ENCODE measurements at regions of chr7 and their contacts with region 1.

Region 1: DNA sequence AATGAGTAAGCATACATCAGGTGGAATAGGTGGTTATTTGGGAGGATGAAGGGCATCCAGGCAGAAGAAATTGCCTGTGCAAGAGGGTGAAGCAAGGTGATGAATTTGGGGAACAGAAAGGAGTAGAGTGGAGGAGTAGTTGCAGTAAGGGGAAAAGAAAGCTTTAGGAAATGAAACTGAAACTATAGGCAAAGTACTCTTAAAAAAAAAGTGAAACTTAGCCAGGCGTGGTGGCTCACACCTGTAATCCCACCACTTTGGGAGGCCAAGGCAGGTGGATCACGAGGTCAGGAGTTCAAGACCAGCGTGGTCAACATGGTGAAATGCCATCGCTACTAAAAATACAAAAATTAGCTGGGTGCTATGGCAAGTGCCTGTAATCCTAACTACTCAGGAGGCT is 17.6 kb downstream of the NUP205 start:
- DNase-seq: no peak
- H3K4me3 ChIP-seq: no peak overlapping the region
- H3K27ac ChIP-seq: no peak overlapping the region
- H3K4me1 ChIP-seq: no peaks in the 10 kb centered on the region
- H3K27me3 ChIP-seq: no peaks in the 10 kb centered on the region
- CTCF ChIP-seq: no peak

Region 2: DNA sequence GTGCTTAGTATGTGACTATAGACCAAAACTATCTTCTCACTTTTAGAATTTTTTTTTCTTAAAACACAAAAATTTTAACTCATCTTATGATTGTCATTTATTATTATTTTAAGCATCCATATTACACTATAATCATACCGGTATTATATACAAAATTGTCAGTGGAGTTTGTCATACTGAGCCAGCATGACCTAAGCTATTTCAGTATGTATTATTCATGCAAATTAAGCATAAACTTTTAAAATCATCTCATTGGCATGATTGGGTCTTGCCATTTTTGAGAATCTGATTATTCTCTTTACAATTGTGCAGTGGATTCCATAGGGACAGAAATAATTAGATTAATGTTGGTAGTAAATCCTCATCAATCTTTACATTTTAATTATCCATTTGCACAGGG is 40.8 kb after region 1 on chr7:
- CTCF ChIA-PET with region 1: no interaction called
- POLR2A ChIA-PET with region 1: no interaction called
- intact Hi-C with region 1: loop called (anchors 5 kb)
- DNase-seq: no peak
- H3K4me3 ChIP-seq: no peak overlapping the region
- H3K27ac ChIP-seq: no peak overlapping the region
- H3K4me1 ChIP-seq: no peaks in the 10 kb centered on the region
- H3K27me3 ChIP-seq: no peaks in the 10 kb centered on the region
- CTCF ChIP-seq: no peak